HCT116 (cell line): ENCODE measurements at regions of chr4 and their contacts with region 1.

Region 1: GRCh38 chr4:147866532-147867271 is 134.8 kb downstream of the ARHGAP10 start:
- DNase-seq: peak; percentile 81
- ATAC-seq: peak; percentile 96
- H3K4me3 ChIP-seq: no peak overlapping the region
- H3K27ac ChIP-seq: no peak overlapping the region
- H3K4me1 ChIP-seq: no peaks in the 10 kb centered on the region
- H3K27me3 ChIP-seq: no peaks in the 10 kb centered on the region
- CTCF ChIP-seq: peak; percentile 97 to 100 (median 100)
- POLR2A ChIP-seq: no peak
- RAD21 ChIP-seq: peak; percentile 100

Region 2: DNA sequence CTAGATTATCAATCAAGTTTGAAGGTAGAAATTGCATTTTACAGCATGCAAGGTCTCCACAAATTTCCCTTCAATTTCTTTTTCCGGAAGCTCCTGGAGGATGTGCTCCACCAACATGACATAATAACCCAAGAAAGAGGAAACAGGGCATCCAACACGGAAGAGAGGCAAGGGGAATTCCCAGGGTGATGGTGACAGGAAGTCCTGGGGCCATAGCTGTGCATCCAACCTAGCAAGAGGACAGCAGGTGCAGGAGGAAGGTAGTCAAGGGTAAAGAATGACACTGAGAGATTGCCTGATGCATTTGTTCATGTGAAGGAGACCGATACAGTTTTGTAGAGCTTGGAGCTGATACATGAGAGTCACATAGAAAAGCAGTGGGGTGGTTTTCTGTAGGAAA is 1806.8 kb before region 1 on chr4:
- CTCF ChIA-PET with region 1: no interaction called
- POLR2A ChIA-PET with region 1: no interaction called
- RAD21 ChIA-PET with region 1: no interaction called
- intact Hi-C with region 1: no loop called
- DNase-seq: no peak
- ATAC-seq: no peak
- H3K4me3 ChIP-seq: no peak overlapping the region
- H3K27ac ChIP-seq: no peak overlapping the region
- H3K4me1 ChIP-seq: no peaks in the 10 kb centered on the region
- H3K27me3 ChIP-seq: 0 out of 2 replicates have a peak, but pooled peaks cover 6% of the 10 kb centered on the region
- CTCF ChIP-seq: no peak
- POLR2A ChIP-seq: no peak
- RAD21 ChIP-seq: no peak

Region 3: DNA sequence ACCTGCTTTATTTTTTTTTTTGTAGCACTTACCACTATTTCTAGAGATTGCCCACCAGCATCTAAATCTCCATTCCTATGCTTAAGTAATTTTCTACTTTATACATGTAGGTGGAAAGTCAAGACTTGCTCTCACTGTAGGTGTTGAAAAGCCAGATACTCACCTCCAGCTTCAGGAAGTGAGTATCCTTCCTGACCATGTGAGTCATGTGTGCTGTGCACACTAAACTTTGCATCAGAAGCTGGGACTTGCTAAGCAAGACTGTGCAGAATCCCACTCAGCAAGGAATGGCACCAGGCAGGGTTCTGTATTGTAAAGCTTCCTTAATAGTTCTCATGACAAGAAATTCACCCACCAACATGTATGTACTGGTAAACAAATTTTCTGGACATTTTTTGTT is 1076.2 kb before region 1 on chr4:
- CTCF ChIA-PET with region 1: no interaction called
- POLR2A ChIA-PET with region 1: no interaction called
- RAD21 ChIA-PET with region 1: no interaction called
- intact Hi-C with region 1: no loop called
- DNase-seq: no peak
- ATAC-seq: no peak
- H3K4me3 ChIP-seq: no peak overlapping the region
- H3K27ac ChIP-seq: no peak overlapping the region
- H3K4me1 ChIP-seq: no peaks in the 10 kb centered on the region
- H3K27me3 ChIP-seq: peaks cover 28% of the 10 kb centered on the region
- CTCF ChIP-seq: no peak
- POLR2A ChIP-seq: no peak
- RAD21 ChIP-seq: no peak

Region 4: DNA sequence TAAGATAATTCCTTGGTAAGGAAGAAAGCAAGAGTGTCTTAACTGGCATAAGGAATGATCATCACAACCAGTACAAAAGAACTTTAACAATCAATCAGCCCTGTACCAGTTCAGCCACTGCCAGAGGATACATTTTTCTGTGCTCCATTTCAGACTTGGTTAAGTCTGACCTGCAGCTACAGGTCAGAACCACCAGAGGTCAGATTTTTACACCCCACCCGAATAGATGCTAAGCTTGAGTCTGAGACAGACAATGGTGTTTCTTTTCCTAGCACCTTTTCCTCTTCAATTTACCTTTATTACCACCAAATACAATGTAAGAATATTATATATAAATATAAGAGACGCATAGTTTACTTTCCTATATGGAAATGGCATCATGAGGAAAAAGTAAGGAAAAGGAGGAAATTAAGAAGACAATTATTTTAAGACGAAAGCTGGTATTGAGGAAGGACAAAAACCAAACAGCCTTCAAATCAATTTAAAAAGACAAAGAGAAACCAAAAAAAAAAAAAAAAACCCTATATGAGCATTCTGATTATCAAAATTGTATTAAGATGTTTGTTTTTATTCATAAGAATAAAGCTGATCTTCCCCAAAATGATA is 705.7 kb before region 1 on chr4:
- CTCF ChIA-PET with region 1: interaction called, 6 read pairs
- POLR2A ChIA-PET with region 1: no interaction called
- RAD21 ChIA-PET with region 1: no interaction called
- intact Hi-C with region 1: loop called (anchors 5 kb)
- DNase-seq: peak; percentile 36
- ATAC-seq: peak; percentile 94
- H3K4me3 ChIP-seq: no peak overlapping the region
- H3K27ac ChIP-seq: no peak overlapping the region
- H3K4me1 ChIP-seq: no peaks in the 10 kb centered on the region
- H3K27me3 ChIP-seq: no peaks in the 10 kb centered on the region
- CTCF ChIP-seq: peak; percentile 77 to 80 (median 77)
- POLR2A ChIP-seq: no peak
- RAD21 ChIP-seq: peak; percentile 88

Region 5: GRCh38 chr4:147596981-147597380 is 269.7 kb before region 1 on chr4:
- CTCF ChIA-PET with region 1: interaction called, 61 read pairs
- POLR2A ChIA-PET with region 1: interaction called, 3 read pairs
- RAD21 ChIA-PET with region 1: interaction called, 3 to 12 read pairs
- intact Hi-C with region 1: loop called (anchors 1 kb)
- DNase-seq: no peak
- ATAC-seq: peak; percentile 50
- H3K4me3 ChIP-seq: no peak overlapping the region
- H3K27ac ChIP-seq: no peak overlapping the region
- H3K4me1 ChIP-seq: peaks cover 0 to 14% of the 10 kb centered on the region in 2 experiments; a peak in 2 of 4 replicates
- H3K27me3 ChIP-seq: no peaks in the 10 kb centered on the region
- CTCF ChIP-seq: no peak
- POLR2A ChIP-seq: no peak
- RAD21 ChIP-seq: no peak

Region 6: DNA sequence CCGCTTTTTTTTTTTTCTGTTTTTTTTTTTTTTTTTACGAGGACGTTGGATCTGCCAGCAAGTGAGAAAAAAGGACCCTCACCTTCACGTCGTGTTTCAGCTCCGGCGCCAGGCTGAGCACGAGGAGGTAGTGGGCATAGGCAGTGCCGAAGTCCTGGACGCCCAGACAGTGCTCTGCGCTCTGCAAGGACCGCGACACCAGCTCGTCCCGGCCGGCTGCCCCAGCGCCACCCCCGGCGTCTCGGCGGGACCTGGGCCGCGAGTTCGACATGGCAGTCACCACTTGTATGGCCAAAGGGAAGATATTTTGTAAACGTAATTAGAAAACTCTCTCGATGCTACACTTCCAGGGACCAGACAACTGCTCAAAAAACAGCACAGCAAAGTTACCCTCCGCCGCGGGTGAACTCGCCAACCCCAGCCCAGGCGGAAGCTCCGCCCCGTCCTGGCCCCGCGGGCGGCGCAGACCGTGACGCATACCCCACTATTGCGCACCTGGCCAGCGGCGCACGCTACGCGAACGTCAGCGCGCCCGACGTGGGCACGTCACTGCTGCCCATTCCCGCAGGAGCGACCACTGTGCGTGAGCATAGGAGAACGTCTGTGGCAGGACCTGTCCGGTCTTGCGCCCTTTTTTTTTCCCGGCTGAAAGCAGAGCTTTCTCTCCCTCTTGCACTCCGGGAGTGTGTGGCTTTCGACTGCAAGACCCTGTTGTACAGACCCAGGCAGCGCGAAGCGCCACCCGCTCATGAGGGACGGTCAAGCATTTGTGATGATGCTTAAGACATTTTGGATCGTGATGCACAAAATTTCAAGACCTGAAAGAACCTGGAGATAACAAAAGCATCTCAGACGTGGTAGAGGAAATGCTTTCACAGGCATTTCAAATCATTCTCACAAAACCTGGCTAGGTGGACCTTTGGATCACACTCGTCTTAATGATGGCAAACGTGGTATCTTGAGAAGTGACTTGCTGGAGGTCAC is 182.7 kb before region 1 on chr4 and contains the start of gene PRMT9:
- CTCF ChIA-PET with region 1: interaction called, 22 read pairs
- POLR2A ChIA-PET with region 1: interaction called, 4 read pairs
- RAD21 ChIA-PET with region 1: interaction called, 3 to 6 read pairs
- intact Hi-C with region 1: no loop called
- DNase-seq: peak; percentile 77
- ATAC-seq: peak; percentile 99
- H3K4me3 ChIP-seq: peak within 1 kb of the TSS; percentile 93 to 94
- H3K27ac ChIP-seq: peak within 1 kb of the TSS; percentile 68
- H3K4me1 ChIP-seq: peaks cover 2 to 15% of the 10 kb centered on the region in 2 experiments; a peak in 2 of 4 replicates
- H3K27me3 ChIP-seq: no peaks in the 10 kb centered on the region
- CTCF ChIP-seq: no peak
- POLR2A ChIP-seq: peak; percentile 98
- RAD21 ChIP-seq: no peak
- total RNA-seq, gene PRMT9: 5.8 TPM

Region 7: GRCh38 chr4:147731580-147732517 is 134.9 kb before region 1 on chr4 and contains the start of gene ARHGAP10:
- CTCF ChIA-PET with region 1: interaction called, 10 read pairs
- POLR2A ChIA-PET with region 1: no interaction called
- RAD21 ChIA-PET with region 1: no interaction called
- intact Hi-C with region 1: no loop called
- DNase-seq: no peak
- ATAC-seq: peak; percentile 79
- H3K4me3 ChIP-seq: peak within 1 kb of the TSS; percentile 78 to 81
- H3K27ac ChIP-seq: peak within 1 kb of the TSS; percentile 88
- H3K4me1 ChIP-seq: peaks cover 54 to 77% of the 10 kb centered on the region in 2 experiments
- H3K27me3 ChIP-seq: no peaks in the 10 kb centered on the region
- CTCF ChIP-seq: no peak
- POLR2A ChIP-seq: peak; percentile 53
- RAD21 ChIP-seq: no peak
- total RNA-seq, gene ARHGAP10: 24.7 TPM

Region 8: DNA sequence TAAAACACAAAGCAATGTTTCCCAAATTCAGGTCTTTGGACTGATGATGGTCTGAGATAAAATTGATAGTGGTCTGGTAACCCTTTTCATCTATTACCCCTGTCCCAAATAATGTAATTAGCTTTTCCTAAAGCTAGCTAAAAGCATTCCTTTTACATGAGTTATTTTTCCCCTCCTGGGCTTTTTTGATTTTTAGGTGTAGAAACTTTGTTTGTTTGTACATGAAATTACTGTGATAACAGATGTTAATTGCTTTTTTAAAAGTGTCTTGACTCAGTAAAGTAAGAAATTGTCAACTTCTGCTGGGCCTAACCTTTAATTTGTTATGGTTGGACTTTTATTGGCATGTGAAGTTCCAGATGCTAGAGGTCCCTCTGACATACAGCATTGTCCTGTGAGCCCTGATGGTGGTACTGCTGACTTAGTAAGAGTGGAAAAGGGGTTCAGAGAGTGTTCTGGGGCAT is 10.6 kb after region 1 on chr4:
- CTCF ChIA-PET with region 1: interaction called, 15 read pairs
- POLR2A ChIA-PET with region 1: no interaction called
- RAD21 ChIA-PET with region 1: no interaction called
- intact Hi-C with region 1: no loop called
- DNase-seq: no peak
- ATAC-seq: no peak
- H3K4me3 ChIP-seq: no peak overlapping the region
- H3K27ac ChIP-seq: no peak overlapping the region
- H3K4me1 ChIP-seq: no peaks in the 10 kb centered on the region
- H3K27me3 ChIP-seq: no peaks in the 10 kb centered on the region
- CTCF ChIP-seq: no peak
- POLR2A ChIP-seq: no peak
- RAD21 ChIP-seq: no peak